ENCODE measurements at regions of chrX and their contacts with region 1.

Region 1: DNA sequence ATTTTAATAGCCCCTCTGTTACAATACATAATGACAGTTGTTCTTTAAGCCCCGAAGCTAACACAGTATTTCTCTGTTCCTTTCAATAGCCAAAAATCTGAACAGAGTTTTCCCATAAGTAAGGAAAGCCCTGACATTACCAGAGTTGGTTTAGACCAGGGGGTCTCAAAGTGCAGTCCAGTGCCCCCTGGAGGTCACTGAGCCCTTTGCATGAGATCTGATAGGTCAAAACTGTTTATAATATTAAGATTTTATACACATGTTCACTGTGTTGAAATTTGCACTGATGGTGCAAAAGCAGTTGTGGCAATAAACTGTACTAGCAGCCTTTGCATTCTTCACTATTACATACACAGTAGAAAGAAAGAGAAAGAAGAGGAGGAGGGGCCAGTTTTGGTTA is 177.1 kb downstream of the SPANXN3 start:
- DNase-seq: no peak

Region 2: DNA sequence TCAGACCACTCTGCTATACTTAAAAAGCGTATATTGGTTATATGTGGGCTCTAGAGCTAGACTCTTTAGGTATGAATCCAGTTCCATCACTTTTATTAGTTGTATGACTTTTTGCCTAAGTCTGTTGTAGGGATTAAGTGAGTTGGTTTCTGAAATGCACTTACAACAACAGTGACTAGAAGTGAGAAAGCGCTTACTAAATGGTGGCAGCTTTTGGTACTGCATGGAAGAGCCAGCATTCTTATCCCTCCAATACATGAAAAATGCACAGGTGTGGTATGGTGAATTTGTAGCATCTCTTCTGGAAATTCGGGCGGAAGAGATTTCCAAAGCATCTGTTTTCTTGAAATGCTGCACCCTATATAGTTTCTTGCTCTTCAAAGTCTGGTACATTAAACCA is 1872.7 kb before region 1 on chrX:
- intact Hi-C with region 1: no loop called
- DNase-seq: no peak

Region 3: GRCh38 chrX:143206951-143207350 is 133.2 kb before region 1 on chrX:
- intact Hi-C with region 1: loop called in 1 of 2 experiments (anchors 5 kb)
- DNase-seq: no peak

Region 4: DNA sequence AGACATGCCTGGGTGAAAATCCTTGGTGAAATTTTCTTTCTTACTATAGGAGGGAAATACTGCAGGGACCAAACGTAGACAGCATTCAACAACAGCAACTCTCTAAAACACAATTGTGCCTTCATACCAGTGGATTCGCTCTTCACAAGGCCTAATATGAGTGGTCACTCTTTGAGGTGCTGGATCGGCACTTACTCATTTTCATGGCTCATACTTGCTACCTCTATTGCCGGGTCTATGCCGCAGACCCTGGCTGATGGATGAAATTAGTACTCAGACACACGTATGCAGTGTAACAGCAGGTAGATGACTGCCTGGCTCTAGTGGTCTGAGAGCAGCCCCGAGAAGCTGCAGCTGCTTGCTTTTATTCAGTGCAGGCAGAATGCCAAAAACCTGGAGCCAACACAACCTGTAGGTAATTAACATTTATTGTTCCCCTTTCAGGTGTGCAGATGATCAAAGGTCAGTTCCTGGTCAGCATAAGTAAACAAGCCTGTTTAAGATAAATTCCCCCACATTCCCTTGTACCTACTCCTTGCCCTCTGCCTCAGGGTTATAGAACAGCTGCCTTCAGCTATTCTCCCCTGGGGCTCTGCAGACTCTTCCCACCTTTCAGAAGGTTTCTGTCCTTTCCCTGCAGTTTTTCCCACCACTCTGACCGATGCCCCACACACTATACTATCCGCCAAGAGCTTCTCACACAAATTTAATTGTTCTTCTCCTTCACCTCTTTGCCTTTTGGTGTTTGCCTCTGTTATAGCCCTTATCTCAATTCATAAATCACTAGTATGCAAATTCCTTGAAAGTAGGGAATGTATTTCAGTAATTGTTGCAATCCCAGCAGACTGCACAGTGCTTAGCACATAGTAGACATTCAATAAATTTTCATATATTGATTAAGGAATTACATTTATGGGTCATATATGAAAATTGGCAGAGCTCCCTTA is 32.9 kb before region 1 on chrX:
- intact Hi-C with region 1: no loop called
- DNase-seq: no peak

Region 5: DNA sequence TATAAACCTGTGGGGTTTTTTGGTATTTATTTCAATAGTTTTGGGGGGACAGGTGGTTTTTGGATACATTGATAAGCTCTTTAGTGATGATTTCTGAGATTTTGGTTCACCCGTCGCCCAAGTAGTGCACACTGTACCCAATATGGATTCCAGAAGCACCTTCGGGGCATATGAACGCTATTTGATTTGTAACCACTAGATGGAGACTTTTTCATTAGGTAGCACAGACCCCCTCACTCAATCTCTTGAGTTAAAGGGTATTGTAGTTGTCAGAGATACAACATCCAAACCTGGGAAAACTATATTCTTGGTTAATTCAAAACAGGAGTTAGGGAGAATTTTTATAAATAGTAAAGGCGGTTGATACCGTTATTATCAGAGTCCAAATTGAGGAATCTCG is 97.2 kb after region 1 on chrX:
- intact Hi-C with region 1: no loop called
- DNase-seq: no peak